Activated naive CD4-positive, alpha-beta T cell treated with anti-CD3 and anti-CD28 coated beads for 36 hours (primary cell): ENCODE measurements at regions of chr3 and their contacts with region 1.

Region 1: DNA sequence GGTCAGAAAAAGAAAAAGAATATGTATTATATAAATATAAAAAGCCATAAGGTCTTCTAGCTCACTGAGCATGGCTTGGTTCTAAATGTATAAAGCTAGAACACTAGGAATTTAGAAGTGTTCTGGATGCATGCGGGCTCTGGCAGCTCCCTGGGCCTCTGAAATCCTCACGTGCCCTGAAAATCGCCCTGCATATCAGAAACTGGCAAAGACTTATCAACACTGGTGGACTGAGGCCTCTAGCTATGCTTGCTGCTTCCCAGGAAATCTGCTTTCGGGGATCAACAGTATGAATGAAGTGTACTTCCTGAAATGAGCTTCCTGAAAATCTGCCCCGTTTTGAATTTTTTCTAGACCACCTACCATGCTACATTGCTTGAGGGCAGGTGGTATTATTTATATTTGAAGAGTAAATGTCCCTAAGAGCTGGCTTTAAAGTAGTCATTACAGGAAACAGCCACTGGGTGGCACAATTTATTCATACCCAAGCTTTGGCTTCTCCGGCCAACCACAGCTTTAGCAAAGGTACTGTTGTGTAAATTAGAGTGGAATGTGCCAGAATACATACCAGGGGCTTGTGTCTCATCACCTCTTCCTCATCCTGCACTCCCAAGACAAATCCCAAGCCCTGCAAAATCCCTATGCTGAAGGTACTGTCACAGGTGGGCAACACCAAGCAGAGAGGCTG is 17.7 kb downstream of the CRTAP start:
- DNase-seq: peak; percentile 50
- H3K4me3 Mint-ChIP-seq: no peak overlapping the region
- H3K27ac Mint-ChIP-seq: no peak overlapping the region
- H3K4me1 Mint-ChIP-seq: peaks cover 4% of the 10 kb centered on the region
- H3K27me3 Mint-ChIP-seq: no peaks in the 10 kb centered on the region

Region 2: GRCh38 chr3:33146791-33147445 is 15.4 kb after region 1 on chr3:
- CTCF ChIA-PET with region 1: interaction called, 19 read pairs
- intact Hi-C with region 1: no loop called
- DNase-seq: no peak
- H3K4me3 Mint-ChIP-seq: no peak overlapping the region
- H3K27ac Mint-ChIP-seq: no peak overlapping the region
- H3K4me1 Mint-ChIP-seq: no peaks in the 10 kb centered on the region
- H3K27me3 Mint-ChIP-seq: peaks cover 2% of the 10 kb centered on the region

Region 3: DNA sequence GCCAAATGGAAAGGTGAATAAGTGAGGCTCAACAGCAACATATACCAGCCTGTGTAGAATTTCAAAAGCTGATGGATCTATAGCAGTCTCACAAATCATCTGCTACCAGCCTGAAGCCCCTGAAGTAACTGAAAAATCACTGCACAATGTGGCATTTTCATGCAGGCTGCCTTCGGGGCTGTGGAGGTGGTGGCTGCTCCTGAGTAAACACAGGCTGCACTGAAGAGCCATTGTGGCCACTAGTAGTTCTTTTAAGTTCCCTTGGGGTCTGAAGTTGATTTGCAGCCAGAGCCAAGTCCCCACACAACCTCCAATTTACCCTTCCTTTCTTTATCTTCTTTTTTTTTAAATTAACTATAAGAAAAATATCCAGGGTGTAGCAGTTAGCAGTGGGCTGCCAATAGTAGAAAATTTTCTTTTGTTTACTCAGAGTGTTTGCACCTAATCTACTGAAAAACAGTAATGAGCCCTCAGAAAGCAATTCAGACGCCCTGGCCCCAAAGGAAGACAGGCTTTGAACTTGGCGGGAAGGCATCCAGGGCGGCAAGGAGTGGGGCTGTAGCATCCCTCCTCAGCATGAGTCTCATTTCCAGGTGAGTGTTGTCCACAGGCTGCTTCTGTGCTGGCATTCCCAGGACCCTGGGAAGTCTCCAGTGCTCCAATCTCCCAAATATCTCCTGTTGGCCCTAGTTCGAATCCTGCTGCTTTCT is 100.4 kb after region 1 on chr3:
- CTCF ChIA-PET with region 1: no interaction called
- intact Hi-C with region 1: no loop called
- DNase-seq: no peak
- H3K4me3 Mint-ChIP-seq: no peak overlapping the region
- H3K27ac Mint-ChIP-seq: no peak overlapping the region
- H3K4me1 Mint-ChIP-seq: no peaks in the 10 kb centered on the region
- H3K27me3 Mint-ChIP-seq: peaks cover 21% of the 10 kb centered on the region

Region 4: GRCh38 chr3:33250712-33251111 is 119.2 kb after region 1 on chr3:
- CTCF ChIA-PET with region 1: interaction called, 6 read pairs
- intact Hi-C with region 1: loop called (anchors 2 kb)
- DNase-seq: no peak
- H3K4me3 Mint-ChIP-seq: no peak overlapping the region
- H3K27ac Mint-ChIP-seq: no peak overlapping the region
- H3K4me1 Mint-ChIP-seq: no peaks in the 10 kb centered on the region
- H3K27me3 Mint-ChIP-seq: peaks cover 16% of the 10 kb centered on the region

Region 5: DNA sequence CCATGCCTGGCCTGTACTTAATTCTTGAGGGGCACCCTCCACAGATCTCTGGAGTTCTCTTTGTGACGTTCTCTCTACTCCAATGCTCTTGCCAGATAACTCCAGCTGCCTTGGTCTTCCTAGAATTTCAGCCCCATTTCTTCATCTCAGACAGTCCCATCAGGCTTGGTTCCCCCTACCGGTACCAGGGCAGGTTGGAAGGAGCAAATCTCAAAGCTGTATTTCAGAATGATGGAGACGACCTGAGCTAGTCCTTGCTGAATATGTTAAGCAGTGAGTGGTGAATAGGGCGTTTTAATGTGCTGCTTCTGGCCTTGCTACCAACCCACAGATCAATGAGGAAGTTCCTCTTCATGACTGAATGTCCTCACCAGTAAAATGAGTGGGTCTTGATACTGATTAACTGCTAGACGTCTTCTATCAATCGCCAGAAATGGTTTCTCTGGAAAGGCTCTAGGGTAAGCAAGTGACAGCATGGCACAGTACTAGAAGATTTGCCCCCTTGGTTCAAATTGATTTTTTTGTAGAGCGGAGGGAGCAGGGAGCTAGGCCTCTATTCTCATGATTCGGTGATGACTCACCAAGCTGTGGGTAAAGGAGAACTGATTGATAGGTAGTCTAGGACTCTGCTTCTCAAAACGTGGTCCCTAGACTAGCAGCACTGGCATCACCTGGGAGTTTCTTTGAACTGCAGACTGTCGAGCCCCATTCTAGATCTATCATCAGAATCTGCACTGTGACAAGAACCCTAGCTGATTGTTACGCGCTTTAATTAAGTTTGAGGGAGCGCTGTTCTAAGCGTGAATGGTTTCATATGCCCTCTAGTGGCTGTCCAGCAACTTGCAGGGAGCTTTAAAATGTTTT is 241.0 kb after region 1 on chr3:
- CTCF ChIA-PET with region 1: interaction called, 77 read pairs
- intact Hi-C with region 1: loop called (anchors 1 kb)
- DNase-seq: peak; percentile 62
- H3K4me3 Mint-ChIP-seq: no peak overlapping the region
- H3K27ac Mint-ChIP-seq: no peak overlapping the region
- H3K4me1 Mint-ChIP-seq: peaks cover 5% of the 10 kb centered on the region
- H3K27me3 Mint-ChIP-seq: peaks cover 11% of the 10 kb centered on the region

Region 6: GRCh38 chr3:33377926-33378325 is 246.5 kb after region 1 on chr3:
- CTCF ChIA-PET with region 1: interaction called, 77 read pairs
- intact Hi-C with region 1: no loop called
- DNase-seq: no peak
- H3K4me3 Mint-ChIP-seq: no peak overlapping the region
- H3K27ac Mint-ChIP-seq: no peak overlapping the region
- H3K4me1 Mint-ChIP-seq: peaks cover 3% of the 10 kb centered on the region
- H3K27me3 Mint-ChIP-seq: no peaks in the 10 kb centered on the region

Region 7: DNA sequence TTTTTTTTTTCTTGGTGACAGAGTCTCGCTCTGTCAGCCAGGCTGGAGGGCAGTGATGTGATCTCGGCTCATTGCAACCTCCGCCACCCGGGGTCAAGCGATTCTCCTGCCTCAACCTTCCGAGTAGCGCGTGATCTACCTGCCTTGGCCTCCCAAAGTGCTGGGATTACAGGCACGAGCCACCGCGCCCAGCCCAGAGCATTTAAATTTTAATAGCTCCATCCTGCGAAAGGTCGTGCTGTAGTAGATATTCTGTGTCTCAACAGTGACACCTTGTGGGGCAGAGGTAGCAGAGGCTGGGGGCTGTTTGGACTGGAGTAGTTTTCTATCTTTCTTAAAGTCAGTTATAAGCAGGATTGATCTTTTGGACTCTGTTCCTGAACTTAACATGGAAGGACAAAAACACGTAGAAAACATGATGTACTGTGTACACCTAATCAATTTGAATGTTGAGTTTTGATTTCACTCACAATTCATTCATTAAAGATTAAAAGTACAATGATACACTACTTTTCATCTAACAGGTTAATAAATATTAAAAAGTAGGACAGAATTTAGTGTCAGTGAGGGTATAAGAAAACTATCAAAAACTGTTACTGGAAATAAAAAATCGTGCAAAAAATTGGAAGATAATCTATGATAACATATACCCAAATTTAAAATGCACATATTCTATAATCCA is 656.0 kb after region 1 on chr3:
- CTCF ChIA-PET with region 1: interaction called, 14 read pairs
- intact Hi-C with region 1: loop called (anchors 1 kb)
- DNase-seq: peak; percentile 74
- H3K4me3 Mint-ChIP-seq: peak overlapping the region; percentile 48
- H3K27ac Mint-ChIP-seq: no peak overlapping the region
- H3K4me1 Mint-ChIP-seq: peaks cover 9% of the 10 kb centered on the region
- H3K27me3 Mint-ChIP-seq: no peaks in the 10 kb centered on the region